Panc1 (cell line): ENCODE measurements at regions of chr2 and their contacts with region 1.

Region 1: DNA sequence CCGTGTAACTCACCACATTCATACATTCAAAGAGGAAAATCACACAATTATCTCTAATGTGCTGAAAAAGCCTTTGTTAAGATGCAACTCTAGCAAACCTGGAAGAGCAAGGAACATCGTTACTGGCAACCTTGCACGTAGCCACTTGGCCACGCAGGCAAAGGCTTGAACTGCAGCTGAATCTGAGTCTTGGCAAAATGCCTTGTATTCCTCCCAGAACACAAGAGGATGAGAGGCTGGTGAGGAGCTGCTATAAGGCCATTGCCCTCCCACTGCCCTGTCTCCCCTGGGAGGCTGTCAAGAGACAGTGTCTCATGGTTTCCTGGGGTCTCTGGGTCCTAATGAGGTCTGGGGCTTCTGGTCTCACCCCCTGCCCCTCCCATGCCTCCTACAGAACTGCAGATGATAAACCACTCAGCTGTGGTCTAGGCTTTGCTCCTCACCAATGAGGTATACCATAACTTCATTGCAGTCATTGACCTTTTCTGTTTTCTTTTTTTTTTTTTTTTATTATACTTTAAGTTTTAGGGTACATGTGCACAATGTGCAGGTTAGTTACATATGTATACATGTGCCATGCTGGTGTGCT is 141.4 kb downstream of the SPP2 start:
- DNase-seq: no peak
- ATAC-seq: peak; percentile 92
- H3K4me3 ChIP-seq: peak overlapping the region; percentile 28 to 43
- H3K27ac ChIP-seq: peak overlapping the region; percentile 98
- H3K4me1 ChIP-seq: peaks cover 32% of the 10 kb centered on the region
- H3K27me3 ChIP-seq: no peaks in the 10 kb centered on the region
- CTCF ChIP-seq: no peak

Region 2: GRCh38 chr2:233746475-233747282 is 445.2 kb before region 1 on chr2:
- CTCF ChIA-PET with region 1: no interaction called
- POLR2A ChIA-PET with region 1: no interaction called
- in situ Hi-C with region 1: no loop called
- intact Hi-C with region 1: no loop called
- DNase-seq: no peak
- ATAC-seq: no peak
- H3K4me3 ChIP-seq: no peak overlapping the region
- H3K27ac ChIP-seq: no peak overlapping the region
- H3K4me1 ChIP-seq: no peaks in the 10 kb centered on the region
- H3K27me3 ChIP-seq: no peaks in the 10 kb centered on the region
- CTCF ChIP-seq: no peak

Region 3: DNA sequence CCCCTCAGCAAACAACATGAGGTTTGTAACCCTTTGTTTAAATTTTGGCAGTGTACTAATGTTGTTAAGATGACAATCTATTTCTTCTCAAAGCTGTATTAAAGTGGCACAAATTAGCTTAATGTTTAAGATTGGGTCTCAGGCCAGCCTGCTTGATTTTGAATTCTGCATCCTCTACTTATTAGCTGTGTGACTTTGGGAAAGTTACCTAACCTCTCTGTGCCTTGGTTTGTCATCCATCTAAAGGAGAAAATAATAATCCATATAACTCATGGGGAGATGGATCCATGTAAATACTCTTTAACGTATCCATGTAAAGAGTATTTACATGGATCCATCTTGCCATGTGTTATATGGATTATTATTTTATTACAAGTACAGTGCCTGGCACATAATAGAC is 272.6 kb before region 1 on chr2:
- CTCF ChIA-PET with region 1: interaction called, 12 read pairs
- POLR2A ChIA-PET with region 1: no interaction called
- in situ Hi-C with region 1: no loop called
- intact Hi-C with region 1: no loop called
- DNase-seq: no peak
- ATAC-seq: no peak
- H3K4me3 ChIP-seq: no peak overlapping the region
- H3K27ac ChIP-seq: peak overlapping the region; percentile 72; the same call in 1 of the 2 replicates
- H3K4me1 ChIP-seq: peaks cover 13% of the 10 kb centered on the region
- H3K27me3 ChIP-seq: no peaks in the 10 kb centered on the region
- CTCF ChIP-seq: no peak

Region 4: DNA sequence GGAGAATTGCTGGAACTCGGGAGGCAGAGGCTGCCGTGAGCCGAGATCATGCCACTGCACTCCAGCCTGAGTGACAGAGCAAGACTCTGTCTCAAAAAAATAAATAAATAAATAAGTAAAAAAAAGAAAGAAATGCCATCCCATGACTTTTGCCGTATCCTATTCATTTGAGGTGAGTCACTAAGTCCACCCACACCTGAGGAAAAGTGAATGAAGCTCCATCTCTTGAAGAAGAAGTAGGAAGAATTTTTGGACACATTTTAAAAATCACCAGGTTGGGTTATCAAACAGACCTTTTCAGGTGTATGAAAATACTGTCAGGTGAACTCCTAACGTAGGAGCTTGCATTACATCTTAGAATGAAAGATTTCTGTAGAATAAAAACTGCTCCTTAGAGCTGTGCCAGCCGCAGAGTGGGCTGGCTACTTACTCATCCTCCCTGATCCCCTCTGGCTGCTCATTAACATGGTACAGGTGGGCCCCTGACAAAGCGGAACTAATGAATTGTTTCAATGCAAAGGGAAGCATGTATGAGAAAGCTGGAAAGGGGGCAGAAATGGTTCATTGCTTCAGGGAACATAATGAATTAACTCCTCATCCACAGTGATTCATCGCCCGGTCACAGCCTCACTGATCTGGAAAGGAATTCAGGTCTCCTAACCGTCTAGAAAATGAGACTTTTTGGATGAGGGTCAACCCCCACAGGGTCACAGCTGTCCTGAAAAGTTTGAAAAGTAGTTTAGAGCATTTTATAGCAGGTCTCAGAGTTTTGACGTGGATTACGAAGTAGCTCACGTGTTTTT is 49.9 kb after region 1 on chr2:
- CTCF ChIA-PET with region 1: no interaction called
- POLR2A ChIA-PET with region 1: no interaction called
- in situ Hi-C with region 1: no loop called
- intact Hi-C with region 1: loop called (anchors 10 kb)
- DNase-seq: no peak
- ATAC-seq: peak; percentile 91
- H3K4me3 ChIP-seq: no peak overlapping the region
- H3K27ac ChIP-seq: peak overlapping the region; percentile 99
- H3K4me1 ChIP-seq: peaks cover 42% of the 10 kb centered on the region
- H3K27me3 ChIP-seq: no peaks in the 10 kb centered on the region
- CTCF ChIP-seq: no peak